K562 (cell line): ENCODE measurements at regions of chr6 and their contacts with region 1.

Region 1: GRCh38 chr6:83057705-83058321 is 7.8 kb downstream of the UBE3D start:
- DNase-seq: peak; percentile 17 to 57 (median 30)
- ATAC-seq: peak; percentile 78
- H3K4me3 ChIP-seq: no peak overlapping the region
- H3K27ac ChIP-seq: no peak overlapping the region
- H3K4me1 ChIP-seq: no peaks in the 10 kb centered on the region; a peak in 1 of 5 replicates
- H3K27me3 ChIP-seq: no peaks in the 10 kb centered on the region
- CTCF ChIP-seq: peak; percentile 68 to 80 (median 75)
- EP300 ChIP-seq: no peak
- POLR2A ChIP-seq: no peak
- RAD21 ChIP-seq: peak; percentile 78 to 81

Region 2: GRCh38 chr6:82247634-82248232 is 810.1 kb before region 1 on chr6 and contains the start of gene IBTK:
- CTCF ChIA-PET with region 1: interaction called, 21 read pairs
- POLR2A ChIA-PET with region 1: interaction called, 3 read pairs
- in situ Hi-C with region 1: loop called (anchors 5 kb)
- intact Hi-C with region 1: loop called (anchors 2 kb)
- DNase-seq: peak; percentile 96 to 99 (median 98)
- ATAC-seq: peak; percentile 86
- H3K4me3 ChIP-seq: peak within 1 kb of the TSS; percentile 83
- H3K27ac ChIP-seq: peak within 1 kb of the TSS; percentile 97
- H3K4me1 ChIP-seq: peaks cover 12 to 14% of the 10 kb centered on the region in 2 experiments; a peak in 4 of 5 replicates
- H3K27me3 ChIP-seq: no peaks in the 10 kb centered on the region
- CTCF ChIP-seq: no peak
- EP300 ChIP-seq: no peak
- POLR2A ChIP-seq: peak; percentile 86
- RAD21 ChIP-seq: no peak
- polyA plus RNA-seq, gene IBTK: 13.2 to 16.9 TPM

Region 3: DNA sequence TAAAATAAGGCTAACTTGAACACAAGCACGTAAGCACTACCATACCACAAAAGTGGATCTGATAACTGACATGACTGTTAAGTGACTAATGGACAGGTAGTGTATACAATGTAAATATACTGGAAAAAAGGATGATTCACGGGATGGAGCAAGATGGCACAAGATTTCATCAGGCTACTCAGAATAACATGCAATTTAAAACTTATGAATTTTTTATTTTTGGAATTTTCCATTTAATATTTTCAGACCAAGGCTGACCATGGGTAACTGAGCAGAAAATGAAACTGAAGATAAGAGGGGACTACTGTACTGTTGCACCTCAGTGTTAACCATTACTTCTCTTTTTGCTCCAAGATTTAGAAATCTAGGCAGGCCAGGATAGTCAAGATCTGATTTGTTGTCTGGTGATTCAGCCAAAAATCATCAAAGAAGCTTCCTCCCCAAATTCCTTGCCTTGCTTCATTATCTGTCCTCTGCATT is 648.8 kb before region 1 on chr6:
- CTCF ChIA-PET with region 1: no interaction called
- POLR2A ChIA-PET with region 1: no interaction called
- in situ Hi-C with region 1: no loop called
- intact Hi-C with region 1: loop called (anchors 10 kb)
- DNase-seq: no peak
- ATAC-seq: no peak
- H3K4me3 ChIP-seq: no peak overlapping the region
- H3K27ac ChIP-seq: no peak overlapping the region
- H3K4me1 ChIP-seq: no peaks in the 10 kb centered on the region
- H3K27me3 ChIP-seq: no peaks in the 10 kb centered on the region
- CTCF ChIP-seq: no peak
- EP300 ChIP-seq: no peak
- POLR2A ChIP-seq: no peak
- RAD21 ChIP-seq: no peak

Region 4: GRCh38 chr6:82741996-82742385 is 315.8 kb before region 1 on chr6:
- CTCF ChIA-PET with region 1: no interaction called
- POLR2A ChIA-PET with region 1: no interaction called
- in situ Hi-C with region 1: loop called (anchors 10 kb)
- intact Hi-C with region 1: loop called (anchors 10 kb)
- DNase-seq: no peak
- ATAC-seq: no peak
- H3K4me3 ChIP-seq: no peak overlapping the region
- H3K27ac ChIP-seq: no peak overlapping the region
- H3K4me1 ChIP-seq: no peaks in the 10 kb centered on the region
- H3K27me3 ChIP-seq: peaks cover 0 to 3% of the 10 kb centered on the region in 2 experiments; a peak in 1 of 5 replicates
- CTCF ChIP-seq: no peak
- EP300 ChIP-seq: no peak
- POLR2A ChIP-seq: no peak
- RAD21 ChIP-seq: no peak

Region 5: DNA sequence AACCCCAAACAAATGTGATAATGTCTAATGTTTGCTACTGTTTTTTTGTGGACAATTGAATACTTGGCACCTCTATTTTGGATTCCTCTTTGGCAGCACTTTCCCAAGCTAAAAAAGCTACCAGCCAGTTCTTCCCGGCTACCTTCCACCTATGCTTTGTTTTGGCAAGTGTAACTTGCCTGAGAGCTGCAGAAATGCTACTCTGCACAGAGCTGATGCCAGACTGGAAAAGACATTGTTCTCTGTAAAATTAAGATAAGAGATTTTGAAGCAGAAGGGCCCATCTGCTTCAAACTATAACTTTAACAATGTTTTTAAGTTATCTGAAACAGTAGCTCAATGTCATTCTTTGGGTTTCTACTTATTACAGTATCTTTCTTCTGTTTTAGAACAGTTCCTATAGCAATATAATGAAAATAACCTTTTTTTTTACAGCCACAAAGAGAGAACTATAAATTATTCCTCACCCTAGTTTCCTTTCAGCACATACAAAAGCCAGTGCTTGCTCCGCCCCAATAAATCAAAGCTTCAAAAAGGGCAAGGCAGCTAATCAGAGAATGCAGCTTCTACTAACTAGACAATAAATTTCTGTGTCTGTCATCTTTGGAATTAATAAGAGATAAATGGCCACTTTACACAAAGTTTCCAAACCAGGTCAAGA is 175.3 kb before region 1 on chr6:
- CTCF ChIA-PET with region 1: no interaction called
- POLR2A ChIA-PET with region 1: no interaction called
- in situ Hi-C with region 1: no loop called
- intact Hi-C with region 1: loop called (anchors 10 kb)
- DNase-seq: no peak
- ATAC-seq: peak; percentile 58; the same call in 2 of the 3 replicates
- H3K4me3 ChIP-seq: no peak overlapping the region
- H3K27ac ChIP-seq: no peak overlapping the region
- H3K4me1 ChIP-seq: peaks cover 0 to 5% of the 10 kb centered on the region in 2 experiments; a peak in 3 of 5 replicates
- H3K27me3 ChIP-seq: no peaks in the 10 kb centered on the region
- CTCF ChIP-seq: no peak
- EP300 ChIP-seq: no peak
- POLR2A ChIP-seq: no peak
- RAD21 ChIP-seq: no peak